ENCODE measurements at regions of chr6 and their contacts with region 1.

Region 1: DNA sequence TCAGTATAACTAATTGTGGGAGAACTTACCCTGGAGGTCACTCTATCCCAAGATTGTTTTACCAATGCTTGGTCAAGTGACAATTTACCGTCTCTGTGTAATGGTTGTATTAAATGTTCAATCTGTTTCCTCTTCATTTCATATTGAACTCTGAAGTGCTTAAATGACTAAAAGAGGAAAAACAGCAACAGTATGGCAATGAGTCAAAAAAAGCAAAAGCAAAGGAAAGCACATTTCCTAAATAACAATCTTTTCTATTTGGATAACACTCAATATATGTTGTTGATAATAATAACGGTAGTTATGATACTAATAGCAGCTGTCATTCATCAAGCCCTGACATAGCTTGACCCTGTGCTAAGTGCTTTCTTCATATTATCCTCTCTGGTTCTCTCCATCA is 152.4 kb downstream of the SYNE1 start:
- DNase-seq: no peak
- H3K4me3 ChIP-seq: no peak overlapping the region
- H3K27me3 ChIP-seq: no peaks in the 10 kb centered on the region
- CTCF ChIP-seq: no peak

Region 2: GRCh38 chr6:152642989-152643388 is 158.2 kb after region 1 on chr6:
- CTCF ChIA-PET with region 1: interaction called, 29 read pairs
- POLR2A ChIA-PET with region 1: no interaction called
- DNase-seq: no peak
- H3K4me3 ChIP-seq: no peak overlapping the region
- H3K27me3 ChIP-seq: no peaks in the 10 kb centered on the region
- CTCF ChIP-seq: peak; percentile 62

Region 3: DNA sequence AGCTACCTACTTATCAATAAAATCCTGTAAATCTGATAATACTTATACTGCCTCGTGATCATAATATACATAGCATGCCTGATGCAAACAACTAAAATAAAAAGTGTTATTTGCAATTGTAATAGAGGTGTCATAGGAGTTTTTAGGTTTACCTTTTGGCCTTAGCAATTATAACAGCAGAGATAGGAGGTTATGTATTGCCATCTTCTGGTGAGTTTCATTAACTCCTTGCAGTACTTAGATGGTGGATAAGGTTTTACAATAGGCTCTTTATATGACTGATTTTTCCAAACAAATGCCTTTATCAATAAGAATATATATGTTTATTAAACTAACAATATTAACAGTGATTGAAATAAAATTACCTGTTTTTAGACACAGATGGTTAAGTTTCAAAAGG is 185.1 kb after region 1 on chr6:
- CTCF ChIA-PET with region 1: interaction called, 56 read pairs
- POLR2A ChIA-PET with region 1: no interaction called
- DNase-seq: no peak
- H3K4me3 ChIP-seq: no peak overlapping the region
- H3K27me3 ChIP-seq: no peaks in the 10 kb centered on the region
- CTCF ChIP-seq: peak; percentile 37

Measured in BJ (cell line).